ENCODE measurements at regions of chr2 and their contacts with region 1.

Region 1: GRCh38 chr2:145931781-145932352 is 1411.9 kb upstream of the ZEB2 start:
- DNase-seq: no peak
- ATAC-seq: no peak
- H3K4me3 ChIP-seq: no peak overlapping the region
- H3K27ac ChIP-seq: no peak overlapping the region
- H3K4me1 ChIP-seq: no peaks in the 10 kb centered on the region
- H3K27me3 ChIP-seq: no peaks in the 10 kb centered on the region
- CTCF ChIP-seq: no peak
- POLR2A ChIP-seq: no peak
- RAD21 ChIP-seq: no peak

Region 2: DNA sequence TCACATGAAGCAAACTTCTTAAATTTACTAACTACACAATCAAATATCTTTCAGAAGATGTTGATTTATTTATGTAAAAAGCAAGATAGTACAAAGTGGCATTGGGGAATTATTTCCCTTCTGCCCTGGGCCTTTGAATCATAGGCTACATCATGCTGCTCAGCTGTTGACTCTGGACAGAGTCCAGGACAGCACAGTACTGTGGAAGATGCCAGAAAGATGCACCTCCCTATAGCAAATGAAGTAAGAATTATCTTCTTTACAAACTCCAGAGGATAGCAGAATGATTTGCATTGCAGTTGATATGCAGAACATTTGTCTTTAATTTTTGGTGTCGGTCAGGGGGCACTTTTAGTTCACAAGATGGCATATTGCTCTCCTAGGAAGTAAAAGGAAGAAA is 57.4 kb before region 1 on chr2:
- CTCF ChIA-PET with region 1: no interaction called
- POLR2A ChIA-PET with region 1: no interaction called
- dilution Hi-C with region 1: no loop called
- in situ Hi-C with region 1: no loop called
- intact Hi-C with region 1: no loop called
- DNase-seq: peak; percentile 64
- ATAC-seq: peak; percentile 71
- H3K4me3 ChIP-seq: no peak overlapping the region
- H3K27ac ChIP-seq: no peak overlapping the region
- H3K4me1 ChIP-seq: no peaks in the 10 kb centered on the region
- H3K27me3 ChIP-seq: no peaks in the 10 kb centered on the region
- CTCF ChIP-seq: no peak
- POLR2A ChIP-seq: no peak
- RAD21 ChIP-seq: no peak

Region 3: DNA sequence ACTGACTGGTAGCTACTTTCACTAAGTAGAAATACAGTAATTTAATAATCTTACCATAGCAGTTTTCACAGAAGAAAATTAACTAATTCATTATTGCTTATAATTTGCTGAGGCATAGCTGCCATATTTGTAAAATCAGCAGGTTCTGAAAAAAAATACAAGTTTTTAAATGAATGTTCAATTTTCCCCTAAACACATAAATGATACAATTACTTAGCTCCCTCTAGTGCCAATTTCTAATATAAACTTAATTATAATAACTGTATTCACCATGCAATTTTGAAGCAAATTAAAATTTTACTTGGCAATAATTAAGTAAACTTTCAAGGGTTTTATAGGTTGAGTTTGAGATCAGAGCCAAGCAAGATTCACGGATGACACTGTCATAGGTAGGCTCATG is 591.3 kb after region 1 on chr2:
- CTCF ChIA-PET with region 1: no interaction called
- POLR2A ChIA-PET with region 1: no interaction called
- dilution Hi-C with region 1: no loop called
- in situ Hi-C with region 1: no loop called
- intact Hi-C with region 1: loop called (anchors 5 kb)
- DNase-seq: peak; percentile 9
- ATAC-seq: no peak
- H3K4me3 ChIP-seq: no peak overlapping the region
- H3K27ac ChIP-seq: no peak overlapping the region
- H3K4me1 ChIP-seq: no peaks in the 10 kb centered on the region
- H3K27me3 ChIP-seq: no peaks in the 10 kb centered on the region
- CTCF ChIP-seq: peak; percentile 39
- POLR2A ChIP-seq: no peak
- RAD21 ChIP-seq: peak; percentile 44